ENCODE measurements at regions of chr16 and their contacts with region 1.

Region 1: GRCh38 chr16:22694887-22695382 is 119.0 kb upstream of the HS3ST2 start:
- DNase-seq: peak in 2 of 5 donors; percentile 38 to 53
- ATAC-seq: peak; percentile 80 to 96 (median 88)
- H3K4me3 ChIP-seq: peak overlapping the region in 1 of 12 donors; percentile 3
- H3K27ac ChIP-seq: peak overlapping the region in 11 of 12 donors; percentile 12 to 73 (median 41)
- H3K4me1 ChIP-seq: peaks cover 0 to 14% (median 0%) of the 10 kb centered on the region in 12 donors
- H3K27me3 ChIP-seq: no peaks in the 10 kb centered on the region
- CTCF ChIP-seq: no peak
- POLR2A ChIP-seq: no peak

Region 2: GRCh38 chr16:21326459-21326858 is 1368.5 kb before region 1 on chr16:
- intact Hi-C with region 1: loop called in 1 of 10 experiments (anchors 10 kb)
- DNase-seq: no peak
- ATAC-seq: no peak
- H3K4me3 ChIP-seq: no peak overlapping the region
- H3K27ac ChIP-seq: no peak overlapping the region
- H3K4me1 ChIP-seq: no peaks in the 10 kb centered on the region
- H3K27me3 ChIP-seq: no peaks in the 10 kb centered on the region
- CTCF ChIP-seq: no peak
- POLR2A ChIP-seq: no peak

Region 3: GRCh38 chr16:21560462-21560861 is 1134.5 kb before region 1 on chr16:
- intact Hi-C with region 1: loop called in 1 of 10 experiments (anchors 5 kb)
- DNase-seq: no peak
- ATAC-seq: no peak
- H3K4me3 ChIP-seq: no peak overlapping the region
- H3K27ac ChIP-seq: no peak overlapping the region
- H3K4me1 ChIP-seq: peaks cover 0 to 16% (median 7%) of the 10 kb centered on the region in 12 donors
- H3K27me3 ChIP-seq: peaks cover 0 to 4% (median 0%) of the 10 kb centered on the region in 9 donors
- CTCF ChIP-seq: no peak
- POLR2A ChIP-seq: no peak

Region 4: DNA sequence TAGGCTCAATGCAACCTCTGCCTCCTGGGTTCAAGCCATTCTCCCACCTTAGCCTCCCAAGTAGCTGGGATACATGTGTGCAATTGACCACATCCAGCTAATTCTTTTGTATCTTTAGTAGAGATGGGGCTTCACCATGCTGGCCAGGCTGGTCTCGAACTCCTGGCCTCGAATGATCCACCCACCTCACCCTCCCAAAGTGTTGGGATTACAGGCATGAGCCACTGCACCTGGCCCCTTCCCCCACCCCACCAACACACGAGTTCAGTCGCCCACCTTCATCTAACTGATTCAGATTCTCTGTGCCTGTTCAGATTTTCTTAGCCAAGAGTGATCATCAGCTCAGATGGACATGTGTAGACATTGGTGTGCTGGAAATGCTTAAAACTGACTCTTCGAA is 1120.6 kb before region 1 on chr16:
- intact Hi-C with region 1: loop called in 1 of 10 experiments (anchors 5 kb)
- DNase-seq: no peak
- ATAC-seq: no peak
- H3K4me3 ChIP-seq: no peak overlapping the region
- H3K27ac ChIP-seq: no peak overlapping the region
- H3K4me1 ChIP-seq: peaks cover 0 to 3% (median 0%) of the 10 kb centered on the region in 12 donors
- H3K27me3 ChIP-seq: no peaks in the 10 kb centered on the region
- CTCF ChIP-seq: no peak
- POLR2A ChIP-seq: no peak

Measured in heart left ventricle (tissue), 16 donors.